AG04449 (cell line): ENCODE measurements at regions of chr16 and their contacts with region 1.

Region 1: DNA sequence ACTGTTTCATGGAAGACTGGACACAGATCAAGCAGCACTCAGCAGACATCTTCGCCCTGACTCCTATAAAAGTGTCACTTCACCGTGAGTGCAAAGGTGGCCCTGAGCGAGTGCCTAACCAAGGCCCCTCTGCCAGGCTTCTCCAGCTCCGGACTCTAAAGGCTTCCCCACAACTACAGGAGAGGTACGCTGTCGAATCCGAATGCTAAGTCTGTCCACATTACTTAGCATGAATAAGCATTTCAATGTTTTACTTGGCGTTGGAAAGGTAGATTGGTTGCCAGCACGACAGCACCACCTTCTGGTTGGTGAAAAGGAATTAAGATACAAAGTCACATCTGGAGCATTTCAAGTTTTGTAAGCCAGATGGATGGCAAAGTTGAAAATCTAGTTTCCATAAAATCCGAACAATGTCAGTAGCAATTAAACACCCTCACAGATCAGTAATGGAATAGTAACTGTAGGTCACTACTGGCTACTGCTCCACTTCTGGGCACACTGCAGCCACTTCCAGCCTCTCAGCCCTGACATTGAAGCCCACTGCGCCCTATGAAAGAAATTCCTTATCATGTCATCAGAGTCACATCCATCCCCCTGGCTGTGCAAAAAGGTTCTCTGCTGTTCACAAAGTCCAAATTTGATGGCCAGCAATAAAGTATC is 100.9 kb downstream of the PARN start:
- DNase-seq: peak; percentile 76
- H3K4me3 ChIP-seq: peak overlapping the region; percentile 32
- CTCF ChIP-seq: peak; percentile 43

Region 2: DNA sequence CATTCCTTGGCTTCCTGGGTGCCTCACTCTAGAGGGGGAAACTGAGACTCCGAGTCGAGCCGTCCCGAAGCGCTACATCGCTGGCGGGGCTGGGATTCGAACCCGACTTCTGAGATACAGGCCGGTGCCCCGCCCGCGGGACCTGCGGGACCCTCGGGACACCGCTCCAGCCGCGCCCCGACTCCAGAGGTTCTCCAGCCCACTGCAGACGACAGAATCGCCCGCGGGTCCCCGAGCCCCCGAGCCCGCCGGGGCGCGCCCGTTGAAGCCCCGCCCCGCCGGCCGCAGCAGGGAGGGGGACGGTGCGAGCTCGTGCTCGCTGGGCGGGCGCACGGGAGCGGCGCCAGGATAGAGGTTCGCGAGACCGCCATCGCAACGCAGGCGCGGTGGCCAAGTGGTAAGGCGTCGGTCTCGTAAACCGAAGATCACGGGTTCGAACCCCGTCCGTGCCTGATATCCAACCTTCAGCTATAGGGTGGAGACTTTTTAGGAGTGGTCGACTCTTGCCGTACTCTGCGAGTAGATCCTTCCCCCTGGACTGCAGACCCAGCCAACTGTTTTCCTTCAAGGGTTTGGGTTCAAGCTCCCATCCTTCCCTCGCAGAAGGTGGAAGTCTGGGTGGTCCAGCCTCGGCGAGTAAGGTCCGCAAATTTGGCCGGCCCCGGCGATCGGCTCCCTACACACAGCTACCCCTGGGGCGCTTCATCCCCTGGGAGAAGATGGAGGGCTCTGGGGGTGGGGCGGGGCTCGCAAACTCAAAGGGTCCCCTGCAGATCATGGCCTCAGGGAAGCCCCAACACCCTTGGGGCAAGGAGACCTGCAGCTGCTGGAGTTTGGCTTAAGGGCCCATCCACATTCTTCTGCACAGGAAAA is 243.4 kb before region 1 on chr16:
- CTCF ChIA-PET with region 1: interaction called, 26 read pairs
- POLR2A ChIA-PET with region 1: no interaction called
- DNase-seq: peak; percentile 85
- H3K4me3 ChIP-seq: peak overlapping the region; percentile 84
- CTCF ChIP-seq: no peak

Region 3: DNA sequence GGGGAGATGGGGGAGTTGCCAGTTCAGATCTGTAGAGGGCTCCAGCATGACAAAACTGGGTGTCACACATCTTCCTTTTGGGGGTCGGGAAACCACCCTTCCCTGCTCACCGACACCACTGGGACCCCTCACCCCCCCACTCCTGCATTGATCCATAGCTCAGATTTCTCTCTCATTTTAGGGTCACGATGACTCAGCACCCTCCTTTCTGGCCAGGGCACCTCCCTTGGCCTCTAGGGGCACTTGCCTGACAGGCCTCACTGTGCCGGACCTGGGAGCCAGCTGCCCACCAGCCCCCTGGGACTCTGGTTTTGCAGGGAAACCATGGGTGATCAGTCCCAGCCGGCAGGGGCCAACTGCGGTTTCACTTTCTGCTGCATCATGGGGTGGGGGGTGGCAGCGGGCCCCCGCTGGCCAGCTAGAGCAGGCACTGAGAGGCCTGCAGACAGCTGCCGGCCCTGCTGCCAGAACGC is 218.6 kb before region 1 on chr16:
- CTCF ChIA-PET with region 1: interaction called, 15 read pairs
- POLR2A ChIA-PET with region 1: no interaction called
- DNase-seq: no peak
- H3K4me3 ChIP-seq: peak overlapping the region; percentile 21
- CTCF ChIP-seq: no peak

Region 4: DNA sequence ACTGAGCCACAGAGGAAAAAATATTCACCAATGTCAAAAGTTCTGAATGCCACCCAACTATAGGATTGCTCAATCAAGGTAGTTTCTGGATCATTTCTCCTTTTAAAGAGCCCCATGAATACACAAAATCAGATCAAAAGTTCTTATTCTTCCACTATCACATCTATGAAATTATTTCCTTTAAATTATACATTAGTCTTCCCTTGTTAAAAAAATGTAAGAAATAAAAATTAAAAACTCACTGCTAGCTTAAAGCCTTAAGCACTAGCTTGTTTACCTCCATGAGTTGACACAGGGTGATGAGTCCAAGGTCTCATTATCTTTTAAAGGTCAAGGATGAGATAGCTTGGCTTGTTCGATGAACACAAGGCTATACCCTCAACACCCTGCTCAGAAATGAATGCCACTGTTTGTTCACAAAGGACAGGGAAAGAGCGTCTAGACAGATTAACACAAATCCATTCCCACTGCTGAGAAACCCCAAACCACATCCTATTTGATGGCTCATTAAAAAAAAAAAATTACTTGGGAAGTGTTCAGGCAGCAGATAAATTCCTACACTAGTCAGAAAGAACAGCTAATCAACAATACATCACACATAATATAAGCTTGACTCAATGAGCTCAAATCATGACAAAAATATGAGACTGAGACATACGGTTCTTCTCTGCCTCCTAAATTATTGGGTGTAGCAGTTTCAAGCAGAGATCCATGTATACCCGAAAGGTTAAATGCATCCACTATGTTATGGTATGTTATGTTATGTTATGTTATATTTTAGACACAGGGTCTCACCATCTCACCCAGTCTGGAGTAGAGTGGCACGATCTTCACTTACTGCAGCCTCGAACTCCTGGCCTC is 18.0 kb before region 1 on chr16:
- CTCF ChIA-PET with region 1: interaction called, 13 read pairs
- POLR2A ChIA-PET with region 1: no interaction called
- DNase-seq: peak; percentile 71
- H3K4me3 ChIP-seq: no peak overlapping the region
- CTCF ChIP-seq: no peak